Calu3 (cell line): ENCODE measurements at regions of chr16 and their contacts with region 1.

Region 1: DNA sequence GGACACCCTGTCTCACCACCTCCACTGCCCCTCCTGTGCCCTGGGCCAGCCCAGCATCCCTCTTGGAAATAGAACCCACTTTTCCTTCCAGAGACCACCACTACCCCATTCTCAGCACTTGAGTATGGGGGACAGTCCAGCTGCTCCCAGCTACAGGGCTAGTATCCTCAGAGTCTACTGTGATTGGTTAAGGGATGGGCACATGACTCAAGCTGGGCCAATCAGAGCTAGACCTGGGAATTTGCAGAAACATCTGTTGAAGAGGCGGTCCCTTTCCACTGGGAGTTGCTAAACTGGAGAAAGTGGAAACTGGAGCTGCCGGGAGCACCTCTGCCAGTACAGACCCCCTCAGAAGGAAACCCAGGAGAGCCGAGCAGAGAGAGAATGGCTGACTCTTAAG is 156.6 kb downstream of the GSG1L start:
- DNase-seq: no peak
- H3K4me3 Mint-ChIP-seq: no peak overlapping the region
- H3K27ac Mint-ChIP-seq: no peak overlapping the region
- H3K4me1 Mint-ChIP-seq: no peaks in the 10 kb centered on the region
- H3K27me3 Mint-ChIP-seq: peaks cover 78% of the 10 kb centered on the region
- CTCF ChIP-seq: no peak

Region 2: DNA sequence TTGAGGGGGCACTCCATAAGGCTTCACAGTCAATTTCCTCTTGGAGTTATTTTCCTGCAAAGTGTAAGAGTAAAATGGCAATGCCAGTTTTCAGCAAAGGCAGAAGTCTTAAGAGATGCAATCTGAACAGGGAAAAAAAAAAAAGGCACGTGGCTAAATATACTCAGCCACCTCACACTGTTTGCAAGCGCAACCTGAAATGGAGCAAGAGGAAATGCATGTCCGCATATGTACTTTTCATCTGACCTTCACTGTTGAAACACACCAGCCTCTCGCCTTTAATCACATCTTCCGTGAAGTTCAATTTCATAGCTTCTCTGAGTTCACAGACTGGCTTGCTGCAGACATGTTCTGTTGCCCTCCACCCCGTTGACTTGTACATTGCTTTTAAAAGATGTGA is 255.6 kb before region 1 on chr16:
- CTCF ChIA-PET with region 1: no interaction called
- intact Hi-C with region 1: no loop called
- DNase-seq: no peak
- H3K4me3 Mint-ChIP-seq: no peak overlapping the region
- H3K27ac Mint-ChIP-seq: no peak overlapping the region
- H3K4me1 Mint-ChIP-seq: peaks cover 9% of the 10 kb centered on the region
- H3K27me3 Mint-ChIP-seq: no peaks in the 10 kb centered on the region
- CTCF ChIP-seq: no peak

Region 3: DNA sequence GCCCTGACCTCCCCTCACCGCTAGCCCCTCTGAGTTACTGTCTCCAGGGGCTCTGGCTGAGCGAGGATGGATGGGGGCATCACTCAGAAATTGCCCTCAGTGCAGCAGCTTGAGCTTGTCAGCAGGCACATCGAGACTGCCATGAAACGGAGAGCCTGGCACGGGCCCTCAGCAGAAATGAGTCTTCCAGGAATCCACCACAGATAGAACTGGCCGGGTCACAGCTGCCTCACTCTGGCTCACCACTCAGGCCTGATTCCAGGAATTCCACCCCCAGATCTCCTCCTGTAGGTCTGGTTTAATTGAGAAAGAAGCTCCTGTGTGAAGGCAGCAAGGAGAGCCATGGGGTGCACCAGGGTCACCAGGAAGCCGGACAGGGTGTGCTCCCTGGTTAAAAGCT is 71.1 kb after region 1 on chr16:
- CTCF ChIA-PET with region 1: interaction called, 10 read pairs
- intact Hi-C with region 1: no loop called
- DNase-seq: no peak
- H3K4me3 Mint-ChIP-seq: no peak overlapping the region
- H3K27ac Mint-ChIP-seq: no peak overlapping the region
- H3K4me1 Mint-ChIP-seq: no peaks in the 10 kb centered on the region
- H3K27me3 Mint-ChIP-seq: peaks cover 83% of the 10 kb centered on the region
- CTCF ChIP-seq: no peak